Calu3 (cell line): ENCODE measurements at regions of chr17 and their contacts with region 1.

Region 1: DNA sequence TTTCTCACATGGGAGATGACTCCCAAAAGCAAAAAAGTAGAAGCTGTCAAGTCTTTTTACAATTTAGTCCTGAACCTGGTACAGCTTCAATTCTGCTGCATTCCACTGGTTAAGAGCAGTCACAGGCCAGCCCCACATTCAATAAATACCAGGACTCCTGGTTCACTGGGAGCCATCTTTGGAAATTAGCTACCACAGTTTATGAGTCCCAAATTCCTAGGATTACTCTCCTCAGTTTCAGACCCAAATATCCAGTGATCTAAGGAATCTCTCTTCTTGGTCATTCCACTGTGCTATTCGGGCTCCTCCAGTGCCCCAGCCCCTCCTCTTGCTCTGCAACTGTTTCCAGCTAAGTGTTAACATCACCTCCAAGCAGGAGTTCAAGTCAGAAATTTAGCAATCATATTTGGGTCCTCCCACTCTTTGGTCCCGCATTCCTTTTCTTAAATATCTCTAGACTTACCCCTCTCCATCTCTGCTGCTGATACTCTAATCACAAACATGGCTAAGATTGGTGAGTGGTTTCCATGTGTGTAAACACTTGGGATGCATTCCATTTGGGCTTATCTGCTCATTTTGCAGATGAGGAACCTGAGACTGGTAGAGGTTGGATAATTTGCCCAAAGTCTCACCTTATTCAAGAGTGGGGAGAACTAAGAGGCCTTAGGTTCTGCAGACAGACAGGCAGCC is 9.6 kb upstream of the WIPF2 start:
- DNase-seq: no peak
- H3K4me3 Mint-ChIP-seq: no peak overlapping the region
- H3K27ac Mint-ChIP-seq: no peak overlapping the region
- H3K4me1 Mint-ChIP-seq: no peaks in the 10 kb centered on the region
- H3K27me3 Mint-ChIP-seq: no peaks in the 10 kb centered on the region
- CTCF ChIP-seq: no peak

Region 2: DNA sequence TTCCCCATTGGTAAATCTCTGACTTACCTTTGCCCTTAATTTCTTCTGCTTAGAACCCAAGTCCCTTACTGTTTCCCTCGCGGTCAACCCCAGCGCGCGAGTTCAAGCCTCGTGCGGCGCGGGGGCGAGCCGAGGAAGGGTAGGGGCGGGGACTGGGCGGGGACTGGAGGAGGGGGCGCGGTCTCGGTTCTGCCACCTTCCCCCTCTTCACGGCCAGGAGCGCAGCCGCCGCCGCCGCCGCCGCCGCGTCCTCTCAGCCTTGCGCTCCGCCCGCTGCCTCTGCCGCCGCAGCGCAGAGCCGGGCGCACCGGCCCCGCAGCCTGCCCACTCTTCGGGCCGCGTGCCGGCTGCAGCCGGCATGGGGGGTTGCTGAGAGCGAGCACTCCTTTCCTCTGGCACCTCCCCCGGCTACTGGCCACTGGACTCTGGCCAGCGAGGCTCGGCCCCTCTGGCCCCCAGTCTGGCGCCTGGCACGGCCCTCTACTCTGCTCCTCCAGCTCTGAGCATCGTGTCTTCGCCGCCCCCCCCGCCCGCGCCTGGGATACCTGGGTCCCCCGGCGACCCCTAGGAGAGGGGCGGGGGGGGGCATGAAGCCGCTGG is 32.2 kb before region 1 on chr17 and contains the start of gene RAPGEFL1:
- CTCF ChIA-PET with region 1: interaction called, 22 read pairs
- intact Hi-C with region 1: no loop called
- DNase-seq: peak; percentile 100
- H3K4me3 Mint-ChIP-seq: peak within 1 kb of the TSS; percentile 76
- H3K27ac Mint-ChIP-seq: peak within 1 kb of the TSS; percentile 61
- H3K4me1 Mint-ChIP-seq: peaks cover 51% of the 10 kb centered on the region
- H3K27me3 Mint-ChIP-seq: no peaks in the 10 kb centered on the region
- CTCF ChIP-seq: no peak
- total RNA-seq, gene RAPGEFL1: 57.9 and 86.3 TPM in 2 replicates

Region 3: GRCh38 chr17:40457964-40458791 is 248.6 kb after region 1 on chr17:
- CTCF ChIA-PET with region 1: interaction called, 6 read pairs
- intact Hi-C with region 1: loop called (anchors 1 kb)
- DNase-seq: peak; percentile 99
- H3K4me3 Mint-ChIP-seq: peak overlapping the region; percentile 13
- H3K27ac Mint-ChIP-seq: no peak overlapping the region
- H3K4me1 Mint-ChIP-seq: peaks cover 33% of the 10 kb centered on the region
- H3K27me3 Mint-ChIP-seq: peaks cover 29% of the 10 kb centered on the region
- CTCF ChIP-seq: no peak